Caco-2 (cell line): ENCODE measurements at regions of chr2 and their contacts with region 1.

Region 1: GRCh38 chr2:125264453-125264852 is 1239.4 kb downstream of the CNTNAP5 start:
- DNase-seq: no peak
- H3K4me3 ChIP-seq: no peak overlapping the region
- H3K4me3 Mint-ChIP-seq: no peak overlapping the region
- H3K27ac Mint-ChIP-seq: no peak overlapping the region
- H3K4me1 ChIP-seq: no peaks in the 10 kb centered on the region
- H3K4me1 Mint-ChIP-seq: no peaks in the 10 kb centered on the region
- H3K27me3 ChIP-seq: no peaks in the 10 kb centered on the region
- H3K27me3 Mint-ChIP-seq: no peaks in the 10 kb centered on the region
- CTCF ChIP-seq: no peak

Region 2: DNA sequence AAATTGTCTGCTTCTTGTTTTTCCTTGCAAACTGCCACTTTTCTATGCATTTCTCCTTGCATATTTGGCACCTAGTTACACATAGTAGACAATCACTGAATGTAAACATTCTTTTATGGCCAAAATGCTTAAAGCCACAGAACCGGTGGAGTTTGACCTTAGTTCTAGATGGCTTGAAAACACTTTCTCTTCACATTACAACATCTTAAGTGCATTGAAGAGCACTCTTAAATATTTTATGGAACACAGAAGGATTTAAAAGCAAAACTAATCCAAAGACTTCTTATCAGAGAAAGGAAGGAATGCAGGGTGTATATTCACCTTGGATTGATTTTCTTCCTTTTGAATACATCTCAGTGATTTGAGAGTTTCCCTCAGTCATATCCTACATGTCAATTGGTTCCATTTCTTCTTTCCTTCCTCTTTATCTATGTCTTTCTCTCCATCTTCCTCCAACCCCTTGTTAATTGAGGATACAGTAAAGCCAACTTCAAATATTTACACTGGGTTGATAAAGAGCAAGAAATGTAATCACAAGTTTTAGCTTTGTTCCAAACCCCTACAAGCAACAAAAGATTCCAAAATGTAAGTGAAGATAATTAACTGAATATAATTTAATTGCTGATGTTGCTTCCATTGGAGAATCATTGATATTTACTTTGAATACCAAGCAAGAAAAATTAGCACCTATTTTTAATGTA is 691.4 kb before region 1 on chr2:
- CTCF ChIA-PET with region 1: no interaction called
- POLR2A ChIA-PET with region 1: no interaction called
- intact Hi-C with region 1: no loop called
- DNase-seq: no peak
- H3K4me3 ChIP-seq: no peak overlapping the region
- H3K4me3 Mint-ChIP-seq: no peak overlapping the region
- H3K27ac Mint-ChIP-seq: no peak overlapping the region
- H3K4me1 ChIP-seq: peaks cover 15% of the 10 kb centered on the region; the same call in 1 of the 2 replicates
- H3K4me1 Mint-ChIP-seq: peaks cover 13% of the 10 kb centered on the region
- H3K27me3 ChIP-seq: no peaks in the 10 kb centered on the region
- H3K27me3 Mint-ChIP-seq: no peaks in the 10 kb centered on the region
- CTCF ChIP-seq: no peak

Region 3: DNA sequence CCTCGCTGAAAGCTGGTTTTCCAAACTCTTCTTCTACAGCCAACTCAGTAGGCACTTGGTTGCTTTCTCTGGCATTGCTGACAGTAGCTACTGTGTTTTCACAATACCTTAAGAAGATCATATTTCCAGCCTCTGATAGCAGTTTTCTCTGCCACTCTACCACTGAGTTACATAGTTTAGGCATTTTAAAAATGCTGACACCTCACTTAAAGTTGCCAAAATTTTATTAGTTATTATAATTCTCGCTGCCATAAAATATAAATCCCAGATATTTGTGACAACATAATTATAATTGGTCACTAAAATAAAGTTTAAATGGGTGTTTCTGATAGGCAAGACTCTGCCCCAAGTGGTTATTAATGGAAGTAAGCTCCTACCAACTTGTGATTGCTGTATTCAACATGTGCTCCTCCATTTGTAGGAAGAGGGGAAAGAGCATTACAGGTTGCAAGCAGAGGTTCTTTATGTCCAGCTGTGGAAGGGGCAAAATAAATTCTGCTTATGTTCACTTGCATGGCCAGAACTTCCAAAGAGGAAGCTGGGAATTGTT is 36.5 kb before region 1 on chr2:
- CTCF ChIA-PET with region 1: no interaction called
- POLR2A ChIA-PET with region 1: no interaction called
- intact Hi-C with region 1: no loop called
- DNase-seq: no peak
- H3K4me3 ChIP-seq: no peak overlapping the region
- H3K4me3 Mint-ChIP-seq: no peak overlapping the region
- H3K27ac Mint-ChIP-seq: no peak overlapping the region
- H3K4me1 ChIP-seq: no peaks in the 10 kb centered on the region
- H3K4me1 Mint-ChIP-seq: no peaks in the 10 kb centered on the region
- H3K27me3 ChIP-seq: no peaks in the 10 kb centered on the region
- H3K27me3 Mint-ChIP-seq: no peaks in the 10 kb centered on the region
- CTCF ChIP-seq: peak; percentile 31 to 39

Region 4: DNA sequence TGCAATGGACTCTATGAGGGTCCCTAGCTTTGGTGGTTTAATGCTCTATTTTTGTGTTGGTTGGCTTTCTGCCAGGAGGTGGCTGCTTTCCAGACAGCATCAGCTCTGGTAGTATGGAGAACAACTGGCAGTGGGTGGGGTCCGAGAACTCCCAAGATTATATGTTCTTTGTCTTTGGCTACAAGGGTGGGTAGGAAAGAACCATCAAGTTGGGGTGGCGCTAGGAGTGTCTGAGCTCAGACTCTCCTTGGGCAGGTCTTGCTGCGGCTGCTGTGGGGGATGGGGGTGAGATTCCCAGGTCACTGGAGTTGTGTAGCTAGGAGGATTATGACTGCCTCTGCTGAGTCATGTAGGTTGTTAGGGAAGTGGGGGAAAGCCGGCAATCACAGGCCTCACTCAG is 415.4 kb after region 1 on chr2:
- CTCF ChIA-PET with region 1: no interaction called
- POLR2A ChIA-PET with region 1: no interaction called
- intact Hi-C with region 1: loop called (anchors 5 kb)
- DNase-seq: no peak
- H3K4me3 ChIP-seq: no peak overlapping the region
- H3K4me3 Mint-ChIP-seq: no peak overlapping the region
- H3K27ac Mint-ChIP-seq: no peak overlapping the region
- H3K4me1 ChIP-seq: no peaks in the 10 kb centered on the region
- H3K4me1 Mint-ChIP-seq: no peaks in the 10 kb centered on the region
- H3K27me3 ChIP-seq: no peaks in the 10 kb centered on the region
- H3K27me3 Mint-ChIP-seq: peaks cover 4% of the 10 kb centered on the region
- CTCF ChIP-seq: no peak